ENCODE measurements at regions of chr16 and their contacts with region 1.

Region 1: DNA sequence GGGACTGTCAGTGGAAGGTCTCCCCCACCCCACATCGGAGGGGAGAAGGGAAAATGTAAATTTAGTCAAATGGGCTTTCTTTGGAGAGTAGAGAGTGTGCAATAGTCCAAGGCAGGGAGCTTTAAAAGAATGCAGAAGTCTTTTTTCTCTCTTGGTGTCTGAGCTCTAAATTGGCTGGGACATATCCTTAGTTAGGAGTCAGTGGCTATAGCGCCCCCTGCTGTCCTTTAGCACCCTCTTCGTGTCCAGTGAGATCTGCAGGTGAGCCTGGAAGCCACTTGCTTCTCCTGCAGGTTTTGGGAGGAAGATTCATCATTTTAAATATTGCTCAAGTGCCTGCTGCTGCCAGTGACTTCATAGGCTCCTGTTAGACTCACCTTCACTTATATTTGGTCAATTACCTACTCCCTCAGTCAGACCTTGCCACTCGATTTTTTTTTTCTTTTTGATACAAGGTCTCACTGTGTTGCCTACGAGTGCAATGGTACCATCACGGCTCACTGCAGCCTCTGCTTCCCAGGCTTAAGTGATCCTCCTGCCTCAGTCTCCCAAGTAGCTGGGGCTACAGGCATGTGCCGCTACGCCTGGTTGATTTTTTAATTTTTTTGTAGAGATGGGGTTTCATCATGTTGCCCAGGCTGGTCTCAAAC is 174.8 kb downstream of the PRKCB start:
- DNase-seq: peak; percentile 82
- ATAC-seq: peak; percentile 57

Region 2: GRCh38 chr16:23742766-23743165 is 267.8 kb before region 1 on chr16:
- intact Hi-C with region 1: loop called (anchors 5 kb)
- DNase-seq: no peak
- ATAC-seq: no peak

Region 3: GRCh38 chr16:23795378-23795777 is 215.2 kb before region 1 on chr16:
- intact Hi-C with region 1: loop called (anchors 10 kb)
- DNase-seq: no peak
- ATAC-seq: no peak

Region 4: DNA sequence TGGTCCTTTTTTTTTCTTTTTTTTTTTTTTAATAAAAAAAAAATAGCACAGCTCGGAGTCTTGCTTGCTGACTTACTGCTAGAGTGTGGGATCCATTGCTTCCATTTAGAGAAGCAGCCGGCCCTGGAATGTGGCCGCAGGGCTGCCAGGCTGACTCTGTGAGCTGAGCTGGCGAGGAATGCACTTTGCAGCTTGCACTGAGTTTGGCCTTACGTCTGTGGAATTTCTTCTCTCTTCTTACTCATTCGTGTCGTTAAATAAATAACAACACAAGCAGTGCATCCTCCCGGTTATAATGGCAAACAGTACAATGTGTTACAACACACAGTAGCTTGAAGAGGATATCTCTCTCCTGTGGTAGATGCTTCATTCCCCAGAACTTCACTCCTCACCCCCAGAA is 105.5 kb before region 1 on chr16:
- intact Hi-C with region 1: loop called (anchors 5 kb)
- DNase-seq: no peak
- ATAC-seq: peak; percentile 67

Region 5: GRCh38 chr16:24036614-24037013 is 26.0 kb after region 1 on chr16:
- intact Hi-C with region 1: no loop called
- DNase-seq: no peak
- ATAC-seq: no peak

Region 6: GRCh38 chr16:24116046-24116770 is 105.6 kb after region 1 on chr16:
- intact Hi-C with region 1: no loop called
- DNase-seq: no peak
- ATAC-seq: peak; percentile 61

Measured in Right ventricle myocardium inferior (tissue), 1 donor.